GM10248 (cell line): ENCODE measurements at regions of chr10 and their contacts with region 1.

Region 1: DNA sequence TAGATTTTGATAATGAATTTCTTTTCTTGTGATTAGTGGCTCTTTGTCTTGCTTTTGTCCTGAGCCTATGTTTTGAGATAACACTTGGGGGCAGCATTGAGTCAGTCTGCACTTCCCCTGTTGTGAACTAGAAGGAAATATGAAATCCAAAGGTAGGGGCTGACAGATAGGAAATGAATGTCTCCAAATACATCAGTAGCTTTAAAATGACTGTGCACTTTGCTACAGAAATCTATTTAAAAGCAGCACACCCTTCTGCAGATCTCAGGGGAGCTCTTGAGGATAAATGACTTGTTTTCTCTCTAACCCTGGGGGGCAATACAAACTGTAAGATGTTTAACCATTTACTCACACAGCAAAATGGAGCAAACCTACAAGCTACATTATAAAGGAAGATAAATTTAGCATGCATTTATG is 176.0 kb upstream of the MYO3A start:
- DNase-seq: peak; percentile 22
- CTCF ChIP-seq: peak; percentile 46

Region 2: DNA sequence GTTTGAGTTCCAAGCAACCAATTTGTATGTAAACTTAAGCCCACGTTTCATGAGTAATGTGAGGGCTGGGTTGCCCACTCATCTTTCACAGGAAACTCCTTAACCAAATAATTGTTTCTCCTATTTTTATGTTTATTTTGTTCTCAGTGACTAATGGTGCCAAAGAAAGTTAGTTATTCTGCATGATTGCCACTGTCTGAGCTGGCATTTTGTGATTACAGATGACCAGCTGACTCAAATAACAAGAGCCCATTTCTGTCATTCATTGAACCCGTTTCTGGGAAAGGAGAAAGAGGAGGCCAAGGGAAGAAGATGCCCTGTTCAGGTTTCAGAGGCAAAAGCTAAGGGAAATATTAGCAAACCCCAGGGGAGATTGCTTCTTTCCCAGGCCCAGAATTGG is 11.0 kb before region 1 on chr10:
- CTCF ChIA-PET with region 1: interaction called, 13 read pairs
- POLR2A ChIA-PET with region 1: no interaction called
- DNase-seq: no peak
- CTCF ChIP-seq: no peak

Region 3: GRCh38 chr10:26087305-26088065 is 329.4 kb after region 1 on chr10:
- CTCF ChIA-PET with region 1: no interaction called
- POLR2A ChIA-PET with region 1: no interaction called
- DNase-seq: no peak
- CTCF ChIP-seq: no peak